ENCODE measurements at regions of chr10 and their contacts with region 1.

Region 1: DNA sequence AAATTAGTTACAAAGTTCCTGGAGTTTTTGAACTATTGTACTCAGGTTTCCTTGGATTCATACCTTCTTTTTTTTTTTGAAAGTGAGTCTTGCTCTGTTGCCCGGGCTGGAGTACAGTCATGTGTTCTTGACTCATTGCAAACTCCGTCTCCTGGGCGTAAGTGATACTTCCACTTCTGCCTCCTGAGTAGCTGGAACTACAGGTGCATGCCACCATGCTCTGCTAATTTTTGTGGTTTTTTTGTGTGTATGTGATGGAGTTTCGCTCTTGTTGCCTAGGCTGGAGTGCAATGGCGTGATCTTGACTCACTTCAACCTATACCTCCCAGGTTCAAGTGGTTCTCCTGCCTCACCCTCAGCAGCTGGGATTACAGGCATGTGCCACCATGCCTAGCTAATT is 22.3 kb downstream of the MCM10 start:
- DNase-seq: no peak
- ATAC-seq: no peak
- H3K4me3 ChIP-seq: no peak overlapping the region
- H3K27ac ChIP-seq: peak overlapping the region in 3 of 4 donors; percentile 67 to 87 (median 80)
- H3K4me1 ChIP-seq: peaks cover 17 to 23% of the 10 kb centered on the region in 2 donors
- H3K27me3 ChIP-seq: no peaks in the 10 kb centered on the region
- CTCF ChIP-seq: no peak
- POLR2A ChIP-seq: no peak

Region 2: DNA sequence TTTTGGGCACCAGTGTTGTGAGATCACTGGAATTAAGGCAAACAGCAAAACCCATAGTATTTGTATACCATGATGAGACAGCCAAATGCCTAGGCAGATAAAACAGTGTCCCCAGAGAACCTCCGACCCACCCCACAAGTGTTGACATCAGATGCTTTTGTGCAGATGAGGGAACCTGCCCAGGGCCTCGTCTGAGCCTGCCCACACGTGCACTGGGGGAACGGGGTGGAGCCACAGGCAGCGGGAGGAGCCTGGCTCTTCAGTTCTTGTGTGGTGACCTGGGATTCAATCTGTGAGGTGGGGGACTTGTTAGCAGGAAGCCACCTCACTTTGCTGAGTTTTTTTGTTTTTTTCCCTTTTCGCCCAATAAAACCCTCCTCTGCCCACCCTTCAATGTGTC is 117.1 kb before region 1 on chr10:
- in situ Hi-C with region 1: no loop called
- intact Hi-C with region 1: no loop called
- DNase-seq: no peak
- ATAC-seq: no peak
- H3K4me3 ChIP-seq: no peak overlapping the region
- H3K27ac ChIP-seq: no peak overlapping the region
- H3K4me1 ChIP-seq: no peaks in the 10 kb centered on the region
- H3K27me3 ChIP-seq: no peaks in the 10 kb centered on the region
- CTCF ChIP-seq: no peak
- POLR2A ChIP-seq: no peak

Region 3: GRCh38 chr10:13115832-13116803 is 67.5 kb before region 1 on chr10:
- in situ Hi-C with region 1: no loop called
- intact Hi-C with region 1: loop called (anchors 1 kb)
- DNase-seq: peak; percentile 57 to 73
- ATAC-seq: peak; percentile 63 to 67
- H3K4me3 ChIP-seq: peak overlapping the region in 2 of 4 donors; percentile 19 to 20
- H3K27ac ChIP-seq: peak overlapping the region; percentile 86 to 97 (median 92)
- H3K4me1 ChIP-seq: peaks cover 48 to 58% of the 10 kb centered on the region in 2 donors
- H3K27me3 ChIP-seq: no peaks in the 10 kb centered on the region
- CTCF ChIP-seq: no peak
- POLR2A ChIP-seq: peak in 1 of 2 donors; percentile 49

Region 4: GRCh38 chr10:13160934-13161856 is 22.4 kb before region 1 on chr10 and contains the start of gene MCM10:
- in situ Hi-C with region 1: no loop called
- intact Hi-C with region 1: loop called (anchors 2 kb)
- DNase-seq: peak; percentile 97 to 98
- ATAC-seq: peak; percentile 99
- H3K4me3 ChIP-seq: peak within 1 kb of the TSS; percentile 48 to 58 (median 51)
- H3K27ac ChIP-seq: peak within 1 kb of the TSS in 1 of 4 donors; percentile 32
- H3K4me1 ChIP-seq: peaks cover 4 to 9% of the 10 kb centered on the region in 2 donors
- H3K27me3 ChIP-seq: no peaks in the 10 kb centered on the region
- CTCF ChIP-seq: peak; percentile 82 to 94 (median 92)
- POLR2A ChIP-seq: no peak
- total RNA-seq, gene MCM10: 0.64 to 1.5 (median 0.78) TPM

Region 5: DNA sequence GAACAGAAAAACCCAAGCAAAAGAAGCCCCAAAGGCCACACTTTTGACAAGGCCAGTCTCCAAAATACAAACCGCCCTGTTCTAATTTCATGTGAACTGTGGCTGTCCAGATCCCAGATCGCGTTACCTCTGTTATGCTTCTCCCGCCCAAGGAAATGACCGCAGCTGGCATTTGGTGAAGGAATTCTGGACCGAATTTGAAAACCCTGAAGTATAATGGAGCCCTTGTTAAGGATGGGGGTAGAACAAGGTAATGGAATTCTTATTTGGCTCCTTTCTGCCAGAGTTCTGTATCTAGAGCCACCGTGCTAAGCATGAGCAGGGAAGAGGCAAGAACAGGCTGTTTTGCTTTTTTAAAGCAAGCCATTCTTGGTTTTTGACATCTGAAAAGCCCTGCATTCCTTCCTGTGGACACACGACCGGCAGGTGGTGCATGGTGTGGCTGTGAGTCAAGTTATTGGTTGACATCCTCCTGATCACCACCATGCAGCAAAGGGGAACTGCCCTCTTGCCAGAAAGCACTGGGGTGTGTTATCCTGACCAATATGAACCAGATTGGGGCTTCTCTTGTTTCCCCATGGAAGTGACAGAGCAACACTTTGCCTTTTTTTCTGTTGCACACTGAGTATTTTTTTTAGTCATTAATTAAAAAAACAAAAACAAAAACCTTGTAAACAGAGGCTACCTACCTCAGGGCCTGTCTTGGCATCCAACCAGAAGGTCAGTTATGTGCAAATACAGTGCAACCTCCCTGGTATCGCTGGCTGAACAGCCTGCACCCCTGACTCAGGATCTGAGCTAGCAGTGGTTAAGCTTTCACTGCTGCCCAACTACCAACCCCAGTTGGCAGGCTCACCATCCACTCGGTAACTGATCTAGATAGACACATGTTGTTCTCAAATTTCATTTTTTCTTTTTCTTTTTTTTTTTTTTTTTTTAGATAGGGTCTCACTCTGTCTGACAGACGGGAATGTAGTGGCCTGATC is 36.4 kb after region 1 on chr10:
- in situ Hi-C with region 1: no loop called
- intact Hi-C with region 1: loop called (anchors 2 kb)
- DNase-seq: peak; percentile 74
- ATAC-seq: peak; percentile 94
- H3K4me3 ChIP-seq: peak overlapping the region in 3 of 4 donors; percentile 4 to 9 (median 4)
- H3K27ac ChIP-seq: peak overlapping the region; percentile 65 to 84 (median 78)
- H3K4me1 ChIP-seq: peaks cover 20 to 23% of the 10 kb centered on the region in 2 donors
- H3K27me3 ChIP-seq: no peaks in the 10 kb centered on the region
- CTCF ChIP-seq: peak in 2 of 5 experiments; percentile 11 to 20
- POLR2A ChIP-seq: no peak

Measured in gastrocnemius medialis (tissue), 4 donors.